Naive thymus-derived CD8-positive, alpha-beta T cell (primary cell): ENCODE measurements at regions of chr6 and their contacts with region 1.

Region 1: GRCh38 chr6:139219271-139219729 is 72.5 kb downstream of the TXLNB start:
- DNase-seq: peak; percentile 36 to 86 (median 65)
- ATAC-seq: peak; percentile 100
- H3K4me3 Mint-ChIP-seq: peak overlapping the region in 5 of 10 donors; percentile 37 to 77 (median 46)
- H3K27ac Mint-ChIP-seq: peak overlapping the region; percentile 58 to 97 (median 88)
- H3K4me1 Mint-ChIP-seq: peaks cover 4 to 14% (median 10%) of the 10 kb centered on the region in 4 donors
- H3K27me3 Mint-ChIP-seq: no peaks in the 10 kb centered on the region

Region 2: GRCh38 chr6:139099984-139100383 is 119.3 kb before region 1 on chr6:
- POLR2A ChIA-PET with region 1: no interaction called
- DNase-seq: no peak
- ATAC-seq: no peak
- H3K4me3 Mint-ChIP-seq: no peak overlapping the region
- H3K27ac Mint-ChIP-seq: peak overlapping the region in 1 of 10 donors; percentile 8
- H3K4me1 Mint-ChIP-seq: peaks cover 4 to 19% (median 11%) of the 10 kb centered on the region in 4 donors
- H3K27me3 Mint-ChIP-seq: no peaks in the 10 kb centered on the region

Region 3: DNA sequence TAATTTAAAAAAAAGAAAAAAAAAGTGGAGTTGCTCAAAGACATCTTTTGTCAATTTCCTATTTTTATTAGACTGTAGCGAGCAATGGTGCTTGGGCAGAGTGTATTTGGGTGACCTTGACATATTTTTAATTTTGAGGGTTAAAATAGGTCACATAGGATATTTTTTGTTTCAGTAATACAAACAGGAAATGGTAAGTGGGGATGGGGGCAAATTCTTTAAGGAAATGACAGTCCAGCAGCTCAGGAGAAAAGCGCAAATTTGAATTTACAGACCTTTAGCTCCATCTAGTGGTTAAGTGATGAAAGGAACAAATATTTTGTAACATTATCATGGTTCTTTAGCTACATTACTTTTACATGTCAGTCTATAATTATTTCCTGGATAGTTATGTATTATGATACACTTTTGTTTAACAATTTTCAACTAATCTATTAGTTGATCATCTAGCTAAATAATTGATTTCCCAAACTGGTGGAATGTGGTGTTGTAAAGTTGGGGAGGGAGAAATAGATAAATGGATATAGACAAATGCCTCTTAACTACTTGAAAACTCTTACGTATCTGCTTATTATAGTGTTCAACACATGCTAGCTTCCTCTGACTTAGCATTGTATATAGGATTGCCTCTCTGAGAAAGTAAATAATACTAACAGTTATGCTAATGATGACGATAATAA is 145.1 kb after region 1 on chr6:
- POLR2A ChIA-PET with region 1: interaction called, 16 read pairs
- DNase-seq: peak in 3 of 10 donors; percentile 72 to 81 (median 72)
- ATAC-seq: peak; percentile 43 to 60
- H3K4me3 Mint-ChIP-seq: peak overlapping the region in 1 of 10 donors; percentile 44
- H3K27ac Mint-ChIP-seq: peak overlapping the region; percentile 4 to 73 (median 38)
- H3K4me1 Mint-ChIP-seq: peaks cover 12 to 50% (median 46%) of the 10 kb centered on the region in 4 donors
- H3K27me3 Mint-ChIP-seq: no peaks in the 10 kb centered on the region